HCT116 (cell line): ENCODE measurements at regions of chr15 and their contacts with region 1.

Region 1: DNA sequence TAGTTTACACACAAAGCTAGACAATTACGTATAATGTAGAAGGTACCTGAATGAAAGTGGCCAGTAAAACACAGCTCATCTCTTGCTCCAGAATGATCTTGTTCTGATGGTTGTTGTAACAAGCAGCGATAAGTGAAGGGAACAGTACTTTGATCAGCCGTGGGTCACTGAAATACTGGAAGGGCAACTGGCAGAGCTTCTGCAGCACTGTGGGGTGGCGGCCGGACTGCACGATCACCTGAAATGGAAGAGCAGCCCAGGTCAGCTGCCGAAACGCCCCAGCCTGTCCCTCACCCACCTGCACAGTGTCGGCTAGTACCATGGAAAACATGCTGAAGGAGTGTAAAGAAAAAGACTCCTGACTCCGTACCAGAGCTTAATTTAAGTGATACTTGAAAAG is 17.3 kb downstream of the ISL2 start:
- DNase-seq: no peak
- ATAC-seq: no peak
- H3K4me3 ChIP-seq: no peak overlapping the region
- H3K27ac ChIP-seq: no peak overlapping the region
- H3K4me1 ChIP-seq: 0 out of 4 replicates have a peak, but pooled peaks cover 2 to 4% of the 10 kb centered on the region in 2 experiments
- H3K27me3 ChIP-seq: no peaks in the 10 kb centered on the region
- CTCF ChIP-seq: no peak
- POLR2A ChIP-seq: no peak
- RAD21 ChIP-seq: no peak

Region 2: DNA sequence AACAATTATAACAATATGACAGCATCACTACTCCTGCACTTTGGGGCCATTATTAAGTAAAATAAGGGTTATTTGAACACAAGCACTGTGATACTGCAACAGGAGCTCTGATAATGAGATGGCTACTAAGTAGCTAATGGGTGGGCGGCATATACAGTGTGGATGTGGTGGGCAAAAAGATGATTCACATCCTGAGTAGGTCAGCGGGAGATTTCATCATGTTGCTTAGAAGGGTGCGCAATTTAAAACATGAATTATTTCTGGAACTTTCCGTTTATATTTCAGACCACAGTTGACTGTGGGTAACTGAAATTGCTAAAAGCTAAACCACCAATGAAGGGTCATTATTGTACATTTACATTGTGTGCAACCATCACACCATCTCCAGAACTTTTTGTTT is 407.9 kb before region 1 on chr15:
- CTCF ChIA-PET with region 1: no interaction called
- POLR2A ChIA-PET with region 1: no interaction called
- RAD21 ChIA-PET with region 1: no interaction called
- intact Hi-C with region 1: no loop called
- DNase-seq: no peak
- ATAC-seq: no peak
- H3K4me3 ChIP-seq: no peak overlapping the region
- H3K27ac ChIP-seq: no peak overlapping the region
- H3K4me1 ChIP-seq: no peaks in the 10 kb centered on the region
- H3K27me3 ChIP-seq: no peaks in the 10 kb centered on the region
- CTCF ChIP-seq: no peak
- POLR2A ChIP-seq: no peak
- RAD21 ChIP-seq: no peak

Region 3: DNA sequence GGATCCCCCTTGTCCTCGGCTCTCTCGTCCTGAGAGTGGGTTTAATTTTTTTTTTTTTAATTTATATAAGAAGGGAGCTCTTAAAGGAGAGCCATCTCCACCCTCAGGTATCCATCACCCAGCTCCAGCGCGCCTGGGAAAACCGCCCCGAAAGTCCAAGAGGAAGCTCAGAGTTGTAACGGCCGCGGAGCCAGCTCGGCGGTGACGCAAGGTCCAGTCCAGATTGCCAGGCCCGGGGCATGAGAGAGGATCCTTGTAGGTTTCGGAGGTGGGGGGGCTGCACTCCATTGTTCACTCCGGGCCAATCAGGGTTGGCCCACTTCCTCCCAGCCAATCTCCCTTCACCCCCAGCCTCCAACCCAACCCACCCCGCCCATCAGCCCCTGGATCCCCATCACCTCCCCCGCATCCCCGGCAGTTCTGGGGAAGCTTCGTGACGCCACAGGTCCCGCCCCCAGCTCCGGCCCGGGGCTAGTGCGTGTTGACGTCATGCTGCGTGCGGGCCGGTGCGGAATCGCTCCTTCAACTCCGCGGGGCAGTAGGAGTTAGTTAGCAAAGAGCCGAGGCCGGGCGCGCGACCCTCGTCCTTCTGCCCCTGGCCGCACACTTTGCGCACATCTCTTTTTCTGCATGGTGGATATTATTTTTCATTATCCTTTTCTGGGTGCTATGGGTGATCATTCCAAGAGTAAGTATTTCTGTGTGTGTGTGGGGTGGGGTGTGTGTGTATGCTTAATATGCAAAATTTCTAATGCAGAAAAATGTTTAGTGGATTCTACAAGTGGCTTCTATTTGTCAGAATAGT is 17.4 kb before region 1 on chr15 and contains the start of gene ISL2:
- CTCF ChIA-PET with region 1: interaction called, 3 read pairs
- POLR2A ChIA-PET with region 1: interaction called, 39 read pairs
- RAD21 ChIA-PET with region 1: no interaction called
- intact Hi-C with region 1: no loop called
- DNase-seq: peak; percentile 94
- ATAC-seq: peak; percentile 92
- H3K4me3 ChIP-seq: peak within 1 kb of the TSS; percentile 66 to 77
- H3K27ac ChIP-seq: peak within 1 kb of the TSS; percentile 70
- H3K4me1 ChIP-seq: peaks cover 10 to 25% of the 10 kb centered on the region in 2 experiments; a peak in 3 of 4 replicates
- H3K27me3 ChIP-seq: no peaks in the 10 kb centered on the region
- CTCF ChIP-seq: no peak
- POLR2A ChIP-seq: peak; percentile 93
- RAD21 ChIP-seq: no peak
- total RNA-seq, gene ISL2: 11.6 TPM

Region 4: DNA sequence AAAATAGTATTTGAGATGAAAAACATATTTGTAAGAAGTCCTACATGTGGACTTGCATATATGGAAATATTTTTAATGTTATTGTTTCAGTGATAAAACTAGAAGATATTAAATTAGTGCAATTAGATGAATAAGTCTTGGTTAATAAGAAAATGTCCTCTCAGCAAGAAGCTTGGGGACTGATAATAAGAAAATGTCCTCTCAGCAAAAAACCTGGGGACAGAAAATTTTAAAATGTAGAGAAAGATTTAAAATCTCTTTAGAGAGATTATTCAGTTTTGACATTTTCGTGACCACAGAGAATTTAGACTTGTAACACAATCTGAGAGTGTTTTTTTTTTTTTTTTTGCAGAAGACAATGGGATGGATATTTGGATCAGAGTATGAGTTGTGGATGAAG is 138.6 kb after region 1 on chr15:
- CTCF ChIA-PET with region 1: no interaction called
- POLR2A ChIA-PET with region 1: no interaction called
- RAD21 ChIA-PET with region 1: no interaction called
- intact Hi-C with region 1: no loop called
- DNase-seq: no peak
- ATAC-seq: no peak
- H3K4me3 ChIP-seq: no peak overlapping the region
- H3K27ac ChIP-seq: no peak overlapping the region
- H3K4me1 ChIP-seq: no peaks in the 10 kb centered on the region
- H3K27me3 ChIP-seq: no peaks in the 10 kb centered on the region
- CTCF ChIP-seq: no peak
- POLR2A ChIP-seq: no peak
- RAD21 ChIP-seq: no peak